Heart left ventricle (tissue), 16 donors: ENCODE measurements at regions of chrX and their contacts with region 1.

Region 1: DNA sequence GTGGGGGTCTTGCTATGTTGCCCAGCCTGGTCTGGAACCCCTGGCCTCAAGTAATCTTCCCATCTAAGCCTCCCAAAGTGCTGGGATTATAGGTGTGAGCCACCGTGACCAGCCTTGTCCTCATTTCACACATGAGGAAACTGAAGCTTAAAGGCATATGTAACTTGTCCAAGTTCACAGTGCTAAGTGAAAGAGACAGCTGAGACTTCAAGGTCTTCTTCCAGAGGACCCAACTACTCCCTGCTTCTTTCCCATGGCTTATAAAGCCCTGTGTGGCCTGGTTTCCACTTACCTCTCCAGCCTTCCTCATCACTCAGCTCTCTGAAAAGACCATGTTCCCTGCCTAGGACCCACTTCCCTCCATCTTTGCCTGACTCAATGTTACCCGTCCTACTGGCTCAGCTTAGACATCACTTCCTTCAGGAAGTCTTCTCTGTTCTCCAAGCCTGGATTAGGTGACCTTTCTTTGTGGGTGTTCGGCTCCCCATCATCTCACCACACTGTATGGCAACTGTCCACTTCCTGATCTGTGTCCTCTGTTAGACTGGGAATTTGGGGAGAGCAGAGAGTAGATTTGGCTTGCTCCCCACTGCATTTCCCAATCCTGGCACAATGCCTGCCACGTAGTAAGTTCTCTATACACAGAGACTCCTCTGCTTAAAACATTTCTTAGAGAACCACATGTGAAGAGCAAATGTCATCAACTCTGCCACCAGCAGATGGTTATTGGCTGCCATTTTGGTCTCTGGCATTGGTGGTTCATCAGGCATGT is 30.4 kb upstream of the LAMP2 start:
- DNase-seq: no peak
- ATAC-seq: no peak
- H3K4me3 ChIP-seq: no peak overlapping the region
- H3K27ac ChIP-seq: no peak overlapping the region
- H3K4me1 ChIP-seq: no peaks in the 10 kb centered on the region
- H3K27me3 ChIP-seq: no peaks in the 10 kb centered on the region
- CTCF ChIP-seq: no peak
- POLR2A ChIP-seq: no peak

Region 2: GRCh38 chrX:120450163-120450562 is 49.3 kb before region 1 on chrX:
- intact Hi-C with region 1: no loop called
- DNase-seq: no peak
- ATAC-seq: no peak
- H3K4me3 ChIP-seq: no peak overlapping the region
- H3K27ac ChIP-seq: no peak overlapping the region
- H3K4me1 ChIP-seq: peaks cover 0 to 7% (median 0%) of the 10 kb centered on the region in 12 donors
- H3K27me3 ChIP-seq: peaks cover 0 to 5% (median 0%) of the 10 kb centered on the region in 9 donors
- CTCF ChIP-seq: peak in 7 of 12 donors; percentile 5 to 35 (median 12)
- POLR2A ChIP-seq: no peak

Region 3: GRCh38 chrX:120629667-120630537 is 130.4 kb after region 1 on chrX and contains the start of gene C1GALT1C1:
- intact Hi-C with region 1: loop called in 1 of 10 experiments (anchors 10 kb)
- DNase-seq: peak; percentile 91 to 96 (median 95)
- ATAC-seq: peak; percentile 98 to 99 (median 98)
- H3K4me3 ChIP-seq: peak within 1 kb of the TSS in 11 of 12 donors; percentile 58 to 89 (median 72)
- H3K27ac ChIP-seq: peak within 1 kb of the TSS; percentile 78 to 93 (median 88)
- H3K4me1 ChIP-seq: peaks cover 0 to 20% (median 2%) of the 10 kb centered on the region in 12 donors
- H3K27me3 ChIP-seq: no peaks in the 10 kb centered on the region
- CTCF ChIP-seq: no peak
- POLR2A ChIP-seq: peak in 1 of 2 donors; percentile 70
- total RNA-seq, gene C1GALT1C1: 14.7 to 25.5 (median 18.5) TPM

Region 4: DNA sequence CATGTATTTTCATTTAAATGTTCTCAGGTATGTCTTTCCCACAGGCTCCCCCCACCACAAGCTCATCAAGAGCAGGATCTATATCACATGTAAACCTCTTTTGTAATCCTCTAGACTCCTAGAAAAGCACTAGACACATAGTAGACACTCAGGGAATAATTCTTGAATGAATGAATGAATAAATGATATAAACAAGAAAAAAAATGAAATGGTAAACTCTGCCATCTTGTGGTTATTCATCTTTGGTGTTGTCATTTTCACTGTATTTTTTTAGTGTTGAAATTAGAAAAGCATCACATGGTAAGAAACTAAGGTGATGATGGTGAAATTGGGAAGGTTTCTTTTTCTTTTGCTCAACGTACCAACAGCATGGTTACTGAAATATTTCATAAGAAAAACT is 164.6 kb after region 1 on chrX:
- intact Hi-C with region 1: loop called in 8 of 10 experiments (anchors 2 to 10 kb)
- DNase-seq: no peak
- ATAC-seq: no peak
- H3K4me3 ChIP-seq: no peak overlapping the region
- H3K27ac ChIP-seq: no peak overlapping the region
- H3K4me1 ChIP-seq: no peaks in the 10 kb centered on the region
- H3K27me3 ChIP-seq: no peaks in the 10 kb centered on the region
- CTCF ChIP-seq: peak in 6 of 12 donors; percentile 21 to 38 (median 28)
- POLR2A ChIP-seq: no peak

Region 5: GRCh38 chrX:120672390-120672789 is 172.9 kb after region 1 on chrX:
- intact Hi-C with region 1: loop called in 8 of 10 experiments (anchors 2 to 10 kb)
- DNase-seq: peak in 4 of 5 donors; percentile 12 to 68 (median 28)
- ATAC-seq: peak; percentile 90 to 96 (median 93)
- H3K4me3 ChIP-seq: no peak overlapping the region
- H3K27ac ChIP-seq: peak overlapping the region; percentile 20 to 75 (median 56)
- H3K4me1 ChIP-seq: peaks cover 0 to 16% (median 8%) of the 10 kb centered on the region in 12 donors
- H3K27me3 ChIP-seq: no peaks in the 10 kb centered on the region
- CTCF ChIP-seq: no peak
- POLR2A ChIP-seq: no peak

Region 6: GRCh38 chrX:120769576-120770341 is 270.3 kb after region 1 on chrX:
- intact Hi-C with region 1: loop called in 9 of 10 experiments (anchors 2 to 10 kb)
- DNase-seq: no peak
- ATAC-seq: peak in 3 of 4 donors; percentile 47 to 51 (median 49)
- H3K4me3 ChIP-seq: no peak overlapping the region
- H3K27ac ChIP-seq: peak overlapping the region in 1 of 12 donors; percentile 15
- H3K4me1 ChIP-seq: peaks cover 0 to 2% (median 0%) of the 10 kb centered on the region in 12 donors
- H3K27me3 ChIP-seq: no peaks in the 10 kb centered on the region
- CTCF ChIP-seq: peak in 11 of 12 donors; percentile 14 to 52 (median 27)
- POLR2A ChIP-seq: no peak